CD14-positive monocyte (primary cell): ENCODE measurements at regions of chr5 and their contacts with region 1.

Region 1: DNA sequence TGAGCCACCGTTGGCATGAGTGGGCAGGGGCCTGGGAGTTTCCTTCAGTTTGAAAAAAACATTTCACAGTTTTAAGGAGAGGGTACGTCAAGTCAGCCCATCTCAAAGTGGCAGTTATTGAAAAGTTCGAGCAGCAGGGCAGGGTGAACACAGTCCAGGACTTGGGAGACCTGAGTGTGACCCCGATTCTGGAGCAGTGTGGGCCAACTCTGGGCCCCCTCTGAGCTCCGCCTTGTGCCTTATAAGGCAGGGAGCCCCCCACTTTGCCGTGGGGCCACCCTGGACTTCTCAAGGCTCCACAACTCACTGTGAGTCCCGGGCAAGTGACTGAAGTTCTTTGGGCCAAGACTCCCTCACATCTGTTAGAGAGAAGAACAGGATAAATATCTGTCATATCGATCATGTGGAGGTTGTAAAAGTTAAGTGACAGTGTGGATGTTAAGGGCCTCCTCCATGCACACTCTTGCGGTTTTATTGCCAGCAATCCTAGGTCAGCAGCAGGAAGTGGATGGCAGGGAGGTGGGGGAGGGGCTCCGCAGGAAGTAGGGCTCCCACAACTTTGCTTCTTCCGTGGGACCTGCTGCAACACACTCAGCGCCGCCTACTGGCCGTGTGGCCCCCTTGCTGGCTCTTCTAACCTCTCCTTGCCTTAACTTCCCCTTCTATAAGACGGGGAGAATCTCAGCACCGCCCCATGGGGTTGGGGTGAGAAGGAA is 38.4 kb downstream of the HRH2 start:
- DNase-seq: peak; percentile 94 to 97 (median 96)
- H3K4me3 ChIP-seq: peak overlapping the region in 1 of 3 experiments; percentile 59
- H3K4me3 Mint-ChIP-seq: peak overlapping the region; percentile 57 to 67
- H3K27ac ChIP-seq: peak overlapping the region; percentile 69 to 92
- H3K27ac Mint-ChIP-seq: peak overlapping the region; percentile 90 to 98 (median 93)
- H3K4me1 ChIP-seq: peaks cover 58 to 61% of the 10 kb centered on the region in 2 donors
- H3K4me1 Mint-ChIP-seq: peaks cover 61% of the 10 kb centered on the region
- H3K27me3 ChIP-seq: no peaks in the 10 kb centered on the region
- H3K27me3 Mint-ChIP-seq: peaks cover 0 to 1% (median 0%) of the 10 kb centered on the region in 3 donors
- CTCF ChIP-seq: peak; percentile 98

Region 2: DNA sequence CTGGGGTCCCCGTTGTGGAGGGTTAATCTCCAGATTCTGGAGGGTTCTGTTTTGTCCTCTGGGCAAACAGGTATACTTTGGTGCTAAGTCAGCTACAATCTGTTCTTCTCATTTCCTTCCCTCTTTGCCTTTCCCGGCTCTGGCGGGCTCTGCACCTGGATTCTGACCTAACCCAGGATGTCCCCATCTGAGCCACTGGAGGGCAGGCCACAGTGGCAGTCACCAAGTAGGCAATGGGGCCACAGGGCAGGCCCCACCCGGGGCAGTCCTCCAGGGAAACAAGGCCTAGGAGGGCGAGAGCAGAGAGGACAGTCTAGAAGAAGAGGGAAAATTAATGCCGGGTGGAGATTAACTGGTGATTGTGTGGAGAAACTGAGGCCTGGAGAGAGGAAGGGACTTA is 78.8 kb before region 1 on chr5:
- intact Hi-C with region 1: loop called in 1 of 2 experiments (anchors 10 kb)
- DNase-seq: peak; percentile 10 to 39 (median 18)
- H3K4me3 ChIP-seq: no peak overlapping the region
- H3K4me3 Mint-ChIP-seq: peak overlapping the region; percentile 19 to 57
- H3K27ac ChIP-seq: peak overlapping the region in 1 of 2 donors; percentile 9
- H3K27ac Mint-ChIP-seq: peak overlapping the region in 4 of 7 donors; percentile 7 to 57 (median 33)
- H3K4me1 ChIP-seq: peaks cover 34% of the 10 kb centered on the region in 2 donors
- H3K4me1 Mint-ChIP-seq: peaks cover 34% of the 10 kb centered on the region
- H3K27me3 ChIP-seq: no peaks in the 10 kb centered on the region
- H3K27me3 Mint-ChIP-seq: peaks cover 0 to 2% (median 2%) of the 10 kb centered on the region in 3 donors
- CTCF ChIP-seq: peak; percentile 41

Region 3: DNA sequence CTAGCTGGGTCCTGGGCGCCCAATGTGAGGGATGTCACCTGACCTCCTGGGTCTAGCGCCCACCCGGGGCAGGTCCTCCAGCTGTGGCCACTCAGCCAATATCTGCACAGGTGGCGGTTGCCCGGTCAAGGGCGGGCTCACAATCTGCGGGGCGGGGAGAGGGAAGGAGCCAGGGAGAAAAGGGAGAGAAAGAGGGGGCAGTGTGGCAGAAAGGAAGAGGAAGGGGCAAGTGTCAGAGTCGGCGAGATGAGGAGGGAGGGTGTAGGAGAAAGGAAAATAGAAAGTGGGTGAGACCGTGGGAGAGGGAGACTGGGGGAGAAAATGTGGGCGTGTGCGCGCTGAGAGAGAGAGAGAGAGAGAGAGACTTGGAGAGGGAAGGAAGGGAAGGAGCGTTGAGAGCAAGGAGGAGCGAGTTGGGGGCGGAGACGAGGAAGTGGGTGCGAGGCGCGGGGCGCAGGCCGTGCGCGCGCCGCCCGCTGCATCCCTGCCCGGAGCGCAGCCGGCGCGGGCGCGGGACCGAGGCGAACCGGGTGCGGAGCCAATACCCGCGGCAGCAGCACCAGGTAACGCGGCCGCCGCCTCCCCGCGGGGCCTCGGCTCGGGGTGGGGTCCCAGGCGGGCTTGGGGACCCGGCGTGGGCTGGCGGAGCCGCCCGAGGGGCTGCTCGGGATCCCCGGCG is 38.6 kb before region 1 on chr5 and contains the start of gene HRH2:
- intact Hi-C with region 1: loop called (anchors 5 kb)
- DNase-seq: peak; percentile 58 to 63 (median 62)
- H3K4me3 ChIP-seq: peak within 1 kb of the TSS; percentile 69 to 97 (median 96)
- H3K4me3 Mint-ChIP-seq: peak within 1 kb of the TSS; percentile 99
- H3K27ac ChIP-seq: peak within 1 kb of the TSS; percentile 41 to 90
- H3K27ac Mint-ChIP-seq: peak within 1 kb of the TSS; percentile 85 to 95 (median 93)
- H3K4me1 ChIP-seq: peaks cover 70 to 86% of the 10 kb centered on the region in 2 donors
- H3K4me1 Mint-ChIP-seq: peaks cover 90% of the 10 kb centered on the region
- H3K27me3 ChIP-seq: no peaks in the 10 kb centered on the region
- H3K27me3 Mint-ChIP-seq: peaks cover 0 to 4% (median 1%) of the 10 kb centered on the region in 3 donors
- CTCF ChIP-seq: no peak
- polyA plus RNA-seq, gene HRH2: 10.6 to 71.7 (median 25.5) TPM